ENCODE measurements at regions of chr3 and their contacts with region 1.

Region 1: GRCh38 chr3:134197681-134198261 is 52.9 kb downstream of the RYK start:
- DNase-seq: peak; percentile 83
- ATAC-seq: peak; percentile 71
- H3K4me3 ChIP-seq: no peak overlapping the region
- H3K27ac ChIP-seq: no peak overlapping the region
- H3K4me1 ChIP-seq: peaks cover 10% of the 10 kb centered on the region
- H3K27me3 ChIP-seq: no peaks in the 10 kb centered on the region
- CTCF ChIP-seq: peak; percentile 90
- POLR2A ChIP-seq: no peak
- RAD21 ChIP-seq: peak; percentile 80

Region 2: GRCh38 chr3:133812872-133813271 is 384.9 kb before region 1 on chr3:
- CTCF ChIA-PET with region 1: no interaction called
- POLR2A ChIA-PET with region 1: no interaction called
- dilution Hi-C with region 1: no loop called
- in situ Hi-C with region 1: no loop called
- intact Hi-C with region 1: loop called (anchors 10 kb)
- DNase-seq: peak; percentile 40
- ATAC-seq: peak; percentile 54
- H3K4me3 ChIP-seq: no peak overlapping the region
- H3K27ac ChIP-seq: no peak overlapping the region
- H3K4me1 ChIP-seq: no peaks in the 10 kb centered on the region
- H3K27me3 ChIP-seq: no peaks in the 10 kb centered on the region
- CTCF ChIP-seq: no peak
- POLR2A ChIP-seq: no peak
- RAD21 ChIP-seq: no peak

Region 3: DNA sequence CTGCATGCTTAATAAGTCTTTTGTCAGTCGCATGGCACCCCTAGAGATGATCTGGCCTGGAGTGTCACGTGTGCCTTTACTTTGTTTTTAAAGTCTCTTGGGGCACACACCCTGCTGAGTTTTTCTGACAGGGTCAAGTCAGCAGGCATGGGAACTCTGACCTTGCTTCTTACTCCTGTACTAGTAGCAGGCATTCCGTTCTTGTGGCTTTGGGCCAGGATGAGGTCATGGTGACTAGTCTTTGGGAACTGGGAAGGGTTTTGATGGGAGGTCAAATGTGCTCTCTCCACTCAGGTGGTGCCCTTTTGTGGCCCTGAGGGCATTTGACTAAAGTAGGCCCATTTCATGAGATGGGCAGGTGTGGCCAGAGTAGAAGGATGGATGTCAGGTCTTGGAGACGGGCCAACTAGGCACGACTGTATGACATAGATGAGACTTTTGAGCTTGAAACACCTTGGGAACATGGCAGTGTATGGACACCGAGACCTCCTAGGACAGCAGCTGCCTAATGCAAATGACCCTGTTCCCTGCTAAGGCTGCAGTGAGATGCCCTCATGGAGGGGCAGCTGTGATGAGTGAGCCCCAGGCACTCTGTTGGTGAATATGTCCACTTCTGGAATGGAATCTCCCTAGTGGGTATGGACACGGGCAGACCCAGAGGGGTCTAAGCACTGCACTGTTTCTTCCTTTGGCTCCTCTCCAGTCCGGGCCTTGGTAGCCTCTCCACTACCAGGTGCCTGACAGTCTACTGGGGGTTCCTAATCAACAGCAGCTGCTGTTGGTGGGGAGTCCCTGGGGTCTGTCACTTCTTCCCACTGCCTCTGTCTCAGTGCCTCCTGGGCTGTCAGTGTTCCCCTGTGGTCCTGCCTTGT is 375.8 kb before region 1 on chr3:
- CTCF ChIA-PET with region 1: no interaction called
- POLR2A ChIA-PET with region 1: no interaction called
- dilution Hi-C with region 1: no loop called
- in situ Hi-C with region 1: loop called (anchors 10 kb)
- intact Hi-C with region 1: loop called (anchors 10 kb)
- DNase-seq: peak; percentile 80
- ATAC-seq: peak; percentile 60
- H3K4me3 ChIP-seq: no peak overlapping the region
- H3K27ac ChIP-seq: no peak overlapping the region
- H3K4me1 ChIP-seq: no peaks in the 10 kb centered on the region
- H3K27me3 ChIP-seq: no peaks in the 10 kb centered on the region
- CTCF ChIP-seq: peak; percentile 40
- POLR2A ChIP-seq: no peak
- RAD21 ChIP-seq: peak; percentile 43

Region 4: DNA sequence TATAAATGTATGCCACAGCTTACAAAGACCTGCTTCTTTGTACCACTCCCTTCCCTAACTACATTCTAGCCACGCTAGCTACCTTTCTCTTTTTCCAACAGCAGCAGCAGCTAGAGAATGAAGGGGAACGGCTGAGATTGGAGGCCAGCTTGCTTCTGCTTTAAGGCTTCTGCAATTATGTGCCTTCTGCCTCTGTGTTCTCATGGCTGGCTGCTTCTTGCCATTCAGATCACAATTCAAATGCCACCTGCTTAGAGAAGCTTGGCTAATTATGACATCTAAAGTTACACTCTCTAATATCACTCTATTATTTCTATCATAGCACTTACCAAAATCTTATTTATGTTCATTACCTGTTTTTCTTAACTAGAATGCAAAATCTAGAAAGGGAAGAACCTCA is 42.3 kb before region 1 on chr3:
- CTCF ChIA-PET with region 1: no interaction called
- POLR2A ChIA-PET with region 1: no interaction called
- dilution Hi-C with region 1: no loop called
- in situ Hi-C with region 1: no loop called
- intact Hi-C with region 1: no loop called
- DNase-seq: no peak
- ATAC-seq: no peak
- H3K4me3 ChIP-seq: no peak overlapping the region
- H3K27ac ChIP-seq: no peak overlapping the region
- H3K4me1 ChIP-seq: no peaks in the 10 kb centered on the region; the same call in 1 of the 2 replicates
- H3K27me3 ChIP-seq: no peaks in the 10 kb centered on the region
- CTCF ChIP-seq: no peak
- POLR2A ChIP-seq: no peak
- RAD21 ChIP-seq: no peak

Measured in IMR-90 (cell line).